Activated B cell treated with CpG ODN at 0.5 μM for 24 hours (primary cell): ENCODE measurements at regions of chr19 and their contacts with region 1.

Region 1: DNA sequence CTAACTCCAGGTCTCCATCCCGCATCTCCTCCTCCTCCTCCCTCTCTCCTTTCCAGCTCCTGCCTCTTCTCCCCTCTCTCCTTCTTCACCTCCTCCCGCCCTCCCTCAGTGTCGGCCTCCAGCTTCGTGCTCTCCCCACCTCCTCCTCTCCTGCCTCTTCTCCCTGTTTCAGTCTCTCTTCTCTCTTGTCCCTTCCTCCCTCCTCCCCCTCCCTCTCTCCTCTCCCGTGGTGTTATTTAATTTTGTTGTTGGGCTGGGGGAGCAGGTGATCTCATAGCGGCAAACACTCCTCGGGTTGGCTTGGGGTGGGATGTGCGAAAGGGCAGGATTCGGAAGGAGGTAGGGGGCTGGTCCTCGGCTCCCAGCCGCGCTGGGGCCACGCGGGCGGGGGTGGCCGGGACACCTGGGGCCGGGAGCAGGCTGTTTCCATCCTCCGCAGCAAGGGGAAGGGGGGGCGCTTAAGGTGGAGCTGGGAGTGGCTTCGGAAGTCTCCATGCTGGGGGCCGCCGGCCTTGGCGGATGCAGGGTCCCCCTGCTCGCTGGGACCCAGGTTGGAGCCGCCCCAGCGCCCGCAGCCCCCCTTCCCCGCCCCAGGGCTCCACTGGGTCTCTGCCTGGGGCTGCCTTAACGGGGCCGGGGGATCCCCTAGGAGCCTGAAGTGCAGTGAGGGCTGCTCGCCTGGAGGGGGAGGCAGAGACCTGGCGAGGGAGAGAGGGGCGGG is at the start of gene CA11:
- DNase-seq: peak; percentile 91
- ATAC-seq: peak; percentile 90
- H3K4me3 Mint-ChIP-seq: peak within 1 kb of the TSS; percentile 93
- H3K27ac Mint-ChIP-seq: peak within 1 kb of the TSS; percentile 92
- H3K4me1 Mint-ChIP-seq: peaks cover 50% of the 10 kb centered on the region
- H3K27me3 Mint-ChIP-seq: no peaks in the 10 kb centered on the region
- CTCF ChIP-seq: no peak
- total RNA-seq, gene CA11: 9.5 and 10.3 TPM in 2 replicates

Region 2: GRCh38 chr19:48624067-48624594 is 22.0 kb before region 1 on chr19:
- CTCF ChIA-PET with region 1: interaction called, 4 read pairs
- POLR2A ChIA-PET with region 1: interaction called, 30 read pairs
- intact Hi-C with region 1: loop called (anchors 1 kb)
- DNase-seq: peak; percentile 95
- ATAC-seq: peak; percentile 80
- H3K4me3 Mint-ChIP-seq: peak overlapping the region; percentile 86
- H3K27ac Mint-ChIP-seq: peak overlapping the region; percentile 90
- H3K4me1 Mint-ChIP-seq: peaks cover 44% of the 10 kb centered on the region
- H3K27me3 Mint-ChIP-seq: no peaks in the 10 kb centered on the region
- CTCF ChIP-seq: no peak

Region 3: DNA sequence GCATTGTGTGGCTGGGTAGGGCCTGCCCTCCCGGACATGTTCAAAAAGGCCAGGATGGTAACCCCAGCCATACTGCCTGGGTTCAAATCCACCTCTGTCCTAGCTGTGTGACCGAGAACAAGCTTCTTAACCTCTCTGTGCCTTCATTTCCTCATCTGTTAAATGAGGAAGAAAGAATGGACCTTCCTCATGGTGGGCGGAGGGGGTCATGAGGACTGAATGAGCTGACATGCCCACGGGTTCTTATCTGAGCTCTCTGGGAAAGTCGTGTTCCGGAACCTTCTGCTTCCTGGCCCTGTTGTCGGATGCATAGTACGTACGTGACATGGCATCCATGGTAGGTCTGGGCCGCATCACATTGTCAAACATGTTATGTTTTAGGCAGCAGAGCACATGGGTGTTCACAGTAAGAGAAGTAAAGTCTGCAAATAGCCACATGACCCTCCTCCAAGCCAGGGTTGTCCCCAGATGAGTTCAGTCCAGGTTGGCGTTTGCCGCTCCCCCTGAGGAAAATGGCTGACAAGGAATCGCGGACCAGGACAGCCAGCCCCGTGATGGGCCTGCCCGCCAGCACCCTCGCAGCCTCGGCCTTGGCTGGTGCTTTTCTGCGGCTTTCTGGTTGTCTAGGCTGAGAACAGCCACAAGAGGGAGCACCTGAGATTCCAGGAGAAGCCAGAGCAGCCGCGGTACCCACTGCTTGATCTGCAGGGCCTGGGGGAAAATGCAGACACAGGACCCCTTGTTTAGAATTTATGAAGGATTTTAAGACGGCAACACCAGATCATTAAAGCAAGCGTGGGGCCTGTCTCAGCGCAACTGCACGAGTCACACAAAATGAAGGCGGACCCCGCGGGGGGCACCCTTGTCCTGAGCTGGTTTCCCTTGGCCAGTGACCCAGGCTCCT is 29.0 kb after region 1 on chr19:
- CTCF ChIA-PET with region 1: interaction called, 15 read pairs
- POLR2A ChIA-PET with region 1: interaction called, 6 read pairs
- intact Hi-C with region 1: loop called (anchors 1 kb)
- DNase-seq: peak; percentile 47
- ATAC-seq: peak; percentile 96
- H3K4me3 Mint-ChIP-seq: no peak overlapping the region
- H3K27ac Mint-ChIP-seq: no peak overlapping the region
- H3K4me1 Mint-ChIP-seq: peaks cover 7% of the 10 kb centered on the region
- H3K27me3 Mint-ChIP-seq: peaks cover 1% of the 10 kb centered on the region
- CTCF ChIP-seq: peak; percentile 65

Region 4: GRCh38 chr19:48738557-48739399 is 92.6 kb after region 1 on chr19:
- CTCF ChIA-PET with region 1: interaction called, 13 read pairs
- POLR2A ChIA-PET with region 1: interaction called, 3 read pairs
- intact Hi-C with region 1: loop called (anchors 1 kb)
- DNase-seq: peak; percentile 86
- ATAC-seq: peak; percentile 94
- H3K4me3 Mint-ChIP-seq: peak overlapping the region; percentile 66
- H3K27ac Mint-ChIP-seq: peak overlapping the region; percentile 70
- H3K4me1 Mint-ChIP-seq: peaks cover 20% of the 10 kb centered on the region
- H3K27me3 Mint-ChIP-seq: peaks cover 8% of the 10 kb centered on the region
- CTCF ChIP-seq: no peak

Region 5: DNA sequence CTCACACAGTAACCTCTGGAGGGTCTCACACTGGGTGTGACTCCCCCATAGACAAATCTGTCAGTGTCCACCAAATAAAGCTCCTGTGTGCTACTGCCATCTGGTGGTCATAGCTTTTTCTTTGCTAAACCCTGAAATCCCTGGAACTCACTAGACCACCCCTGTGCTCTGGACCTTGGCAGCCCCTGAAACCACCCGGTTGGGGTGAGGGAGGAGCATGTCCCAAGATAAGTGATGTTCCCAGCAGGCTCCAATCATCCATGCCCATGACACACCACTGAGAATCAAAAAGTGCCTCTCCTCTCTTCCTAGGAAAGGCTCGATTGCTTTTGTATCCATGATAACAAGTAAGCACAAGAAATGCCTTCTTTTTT is 196.6 kb after region 1 on chr19:
- CTCF ChIA-PET with region 1: interaction called, 15 read pairs
- POLR2A ChIA-PET with region 1: interaction called, 4 read pairs
- intact Hi-C with region 1: loop called (anchors 2 kb)
- DNase-seq: peak; percentile 27
- ATAC-seq: peak; percentile 71
- H3K4me3 Mint-ChIP-seq: no peak overlapping the region
- H3K27ac Mint-ChIP-seq: peak overlapping the region; percentile 15
- H3K4me1 Mint-ChIP-seq: peaks cover 5% of the 10 kb centered on the region
- H3K27me3 Mint-ChIP-seq: no peaks in the 10 kb centered on the region
- CTCF ChIP-seq: no peak